IMR-90 (cell line): ENCODE measurements at regions of chr17 and their contacts with region 1.

Region 1: GRCh38 chr17:41264599-41264998 is 579 bp upstream of the KRTAP9-6 start:
- DNase-seq: no peak
- ATAC-seq: no peak
- H3K4me3 ChIP-seq: no peak overlapping the region
- H3K27ac ChIP-seq: no peak overlapping the region
- H3K4me1 ChIP-seq: no peaks in the 10 kb centered on the region
- H3K27me3 ChIP-seq: peaks cover 9% of the 10 kb centered on the region
- CTCF ChIP-seq: no peak
- POLR2A ChIP-seq: no peak
- RAD21 ChIP-seq: no peak

Region 2: GRCh38 chr17:41278176-41278955 is 13.8 kb after region 1 on chr17:
- CTCF ChIA-PET with region 1: no interaction called
- POLR2A ChIA-PET with region 1: no interaction called
- dilution Hi-C with region 1: no loop called
- in situ Hi-C with region 1: no loop called
- intact Hi-C with region 1: loop called (anchors 2 kb)
- DNase-seq: no peak
- ATAC-seq: no peak
- H3K4me3 ChIP-seq: no peak overlapping the region
- H3K27ac ChIP-seq: no peak overlapping the region
- H3K4me1 ChIP-seq: peaks cover under 1% of the 10 kb centered on the region; the same call in 1 of the 2 replicates
- H3K27me3 ChIP-seq: peaks cover 5% of the 10 kb centered on the region
- CTCF ChIP-seq: no peak
- POLR2A ChIP-seq: no peak
- RAD21 ChIP-seq: no peak